CD8-positive, alpha-beta T cell (primary cell): ENCODE measurements at regions of chr4 and their contacts with region 1.

Region 1: DNA sequence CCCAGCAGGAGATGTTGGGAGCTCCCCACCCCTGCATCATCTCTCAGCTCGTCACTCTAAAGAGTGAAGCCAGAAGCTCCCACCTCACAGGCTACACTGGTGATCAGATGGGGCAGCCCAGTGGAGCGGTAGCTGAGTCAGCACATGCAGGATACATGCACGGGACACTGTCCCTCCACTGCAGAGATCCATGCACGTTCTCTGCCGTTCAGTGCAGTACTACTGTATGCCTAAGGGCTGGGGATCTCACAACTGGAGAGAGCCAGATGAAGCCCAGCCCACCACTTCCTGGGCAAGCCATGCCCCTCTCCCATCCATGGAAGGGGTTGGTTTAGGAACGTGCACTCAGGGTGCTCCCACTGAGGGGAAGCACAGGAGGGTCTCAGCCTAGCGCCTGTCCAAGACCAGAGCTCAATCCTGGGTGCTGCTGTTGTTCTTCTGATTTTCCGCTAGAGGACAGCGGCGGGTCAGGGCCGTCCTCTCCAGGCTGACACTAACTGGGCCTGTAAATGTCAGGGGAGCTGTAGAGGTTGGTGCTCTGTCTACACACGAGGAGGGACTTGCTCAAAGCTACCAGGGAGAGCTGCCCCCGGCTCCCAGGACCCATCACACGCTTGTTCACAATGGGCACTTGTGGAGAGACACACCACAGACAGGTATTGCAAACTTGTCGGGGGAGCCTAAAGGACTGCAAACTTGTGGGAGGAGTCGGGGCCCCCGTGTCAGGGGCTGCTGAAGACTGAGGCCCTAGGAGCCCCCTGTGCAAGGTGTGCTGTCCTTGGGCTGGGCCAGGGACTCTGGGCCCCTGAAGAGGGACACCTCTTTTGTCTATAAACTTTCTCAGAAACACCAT is 18.2 kb upstream of the ABLIM2 start:
- DNase-seq: peak in 7 of 9 experiments; percentile 21 to 62 (median 57)
- ATAC-seq: peak; percentile 98
- H3K4me3 ChIP-seq: no peak overlapping the region
- H3K4me3 Mint-ChIP-seq: no peak overlapping the region
- H3K27ac ChIP-seq: no peak overlapping the region
- H3K27ac Mint-ChIP-seq: no peak overlapping the region
- H3K4me1 ChIP-seq: no peaks in the 10 kb centered on the region
- H3K4me1 Mint-ChIP-seq: peaks cover 2% of the 10 kb centered on the region
- H3K27me3 ChIP-seq: no peaks in the 10 kb centered on the region
- H3K27me3 Mint-ChIP-seq: peaks cover 2% of the 10 kb centered on the region
- CTCF ChIP-seq: peak; percentile 68

Region 2: GRCh38 chr4:8015512-8015911 is 161.3 kb before region 1 on chr4:
- CTCF ChIA-PET with region 1: no interaction called
- POLR2A ChIA-PET with region 1: no interaction called
- intact Hi-C with region 1: no loop called
- DNase-seq: no peak
- ATAC-seq: no peak
- H3K4me3 ChIP-seq: no peak overlapping the region
- H3K4me3 Mint-ChIP-seq: no peak overlapping the region
- H3K27ac ChIP-seq: no peak overlapping the region
- H3K27ac Mint-ChIP-seq: no peak overlapping the region
- H3K4me1 ChIP-seq: no peaks in the 10 kb centered on the region
- H3K4me1 Mint-ChIP-seq: no peaks in the 10 kb centered on the region
- H3K27me3 ChIP-seq: no peaks in the 10 kb centered on the region
- H3K27me3 Mint-ChIP-seq: no peaks in the 10 kb centered on the region
- CTCF ChIP-seq: no peak

Region 3: DNA sequence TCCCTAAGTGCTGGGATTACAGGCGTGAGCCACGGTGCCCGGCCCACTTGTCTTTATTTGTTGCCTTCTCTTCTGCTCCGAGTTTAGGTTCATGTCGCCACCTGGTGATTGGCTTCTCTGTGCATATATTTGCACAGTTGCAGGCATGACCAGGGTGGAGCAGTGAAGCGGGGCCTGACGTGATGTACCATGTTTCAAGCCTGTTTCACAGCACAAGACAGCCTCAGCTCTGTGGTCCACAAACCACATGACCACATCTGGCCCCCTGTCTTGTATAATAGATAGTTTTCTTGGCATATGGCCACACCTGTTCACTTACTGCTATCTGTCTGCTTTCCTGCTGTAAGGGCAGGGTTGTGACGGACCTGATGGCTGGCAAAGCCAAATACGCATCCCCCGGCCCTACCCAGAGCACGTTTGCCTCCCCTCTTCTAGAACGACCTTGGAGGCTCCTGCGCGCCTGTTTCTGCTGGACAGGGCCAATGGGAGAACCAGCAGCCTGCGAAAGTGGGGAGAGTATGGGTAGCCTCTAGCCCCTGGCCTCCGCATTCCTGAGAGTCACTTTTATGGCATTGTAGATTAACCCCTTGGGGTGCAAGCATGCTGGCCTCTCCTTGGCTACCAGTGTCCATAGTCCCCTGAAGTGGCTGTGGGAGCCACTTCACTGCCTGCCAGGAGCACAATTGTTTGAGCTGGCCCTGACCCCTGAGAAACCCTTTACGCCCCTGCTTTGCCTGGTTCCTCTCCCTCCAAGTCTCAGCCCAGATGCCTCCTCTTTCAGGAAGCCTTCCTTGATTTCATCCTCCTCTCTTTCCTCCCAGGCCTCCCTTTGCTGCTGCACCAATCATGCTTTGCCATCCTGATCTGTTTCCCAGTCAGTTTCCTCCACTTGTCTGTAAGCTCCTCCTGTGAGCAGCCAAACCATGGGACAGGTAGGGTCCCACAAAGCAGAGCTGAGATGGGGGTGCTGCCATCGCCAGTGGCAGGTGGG is 16.3 kb after region 1 on chr4:
- CTCF ChIA-PET with region 1: interaction called, 13 read pairs
- POLR2A ChIA-PET with region 1: no interaction called
- intact Hi-C with region 1: loop called in 1 of 2 experiments (anchors 1 kb)
- DNase-seq: peak in 5 of 9 experiments; percentile 21 to 77 (median 56)
- ATAC-seq: peak; percentile 93
- H3K4me3 ChIP-seq: no peak overlapping the region
- H3K4me3 Mint-ChIP-seq: no peak overlapping the region
- H3K27ac ChIP-seq: no peak overlapping the region
- H3K27ac Mint-ChIP-seq: peak overlapping the region; percentile 62
- H3K4me1 ChIP-seq: peaks cover 7% of the 10 kb centered on the region
- H3K4me1 Mint-ChIP-seq: peaks cover 11% of the 10 kb centered on the region
- H3K27me3 ChIP-seq: no peaks in the 10 kb centered on the region
- H3K27me3 Mint-ChIP-seq: no peaks in the 10 kb centered on the region
- CTCF ChIP-seq: no peak

Region 4: DNA sequence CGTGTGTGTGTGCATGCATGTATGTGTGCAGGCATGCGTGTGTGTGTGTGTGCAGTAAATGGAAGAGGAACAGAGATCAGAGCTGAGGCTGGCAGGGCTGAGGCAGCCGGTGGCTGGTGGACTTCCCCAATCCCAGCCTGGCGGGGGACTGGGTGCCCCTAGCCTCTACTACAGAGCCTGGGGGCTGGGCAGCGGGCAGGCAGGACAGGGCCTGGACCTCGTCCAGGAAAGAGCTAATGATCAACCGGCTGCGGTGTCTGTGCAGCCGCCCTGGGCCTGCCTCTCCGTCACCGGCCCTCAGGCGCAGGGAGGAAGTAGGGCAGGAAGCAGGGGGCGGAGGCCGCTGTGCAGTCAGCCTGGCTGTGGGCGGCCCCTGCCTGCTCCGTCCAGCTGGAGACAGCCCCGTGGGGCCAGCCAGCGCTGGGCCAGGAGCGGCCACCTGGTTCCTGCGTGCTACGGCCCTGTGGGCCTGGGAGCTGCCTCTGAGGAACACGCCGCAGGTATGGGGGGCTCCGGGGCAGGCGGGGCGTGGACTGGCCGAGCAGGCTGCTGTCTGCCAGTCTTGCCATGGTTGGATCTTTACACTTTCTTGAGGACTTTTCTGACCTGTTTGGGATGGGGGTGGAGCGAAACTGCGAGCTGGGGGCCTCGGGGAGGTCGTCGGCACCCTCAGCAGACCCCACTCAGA is 22.3 kb after region 1 on chr4 and contains the start of gene SH3TC1:
- CTCF ChIA-PET with region 1: interaction called, 13 read pairs
- POLR2A ChIA-PET with region 1: interaction called, 4 read pairs
- intact Hi-C with region 1: no loop called
- DNase-seq: peak; percentile 19 to 83 (median 59)
- ATAC-seq: peak; percentile 52
- H3K4me3 ChIP-seq: peak within 1 kb of the TSS; percentile 63 to 69
- H3K4me3 Mint-ChIP-seq: peak within 1 kb of the TSS; percentile 97
- H3K27ac ChIP-seq: peak within 1 kb of the TSS; percentile 43 to 61
- H3K27ac Mint-ChIP-seq: peak within 1 kb of the TSS; percentile 97
- H3K4me1 ChIP-seq: peaks cover 47% of the 10 kb centered on the region
- H3K4me1 Mint-ChIP-seq: peaks cover 45% of the 10 kb centered on the region
- H3K27me3 ChIP-seq: no peaks in the 10 kb centered on the region
- H3K27me3 Mint-ChIP-seq: no peaks in the 10 kb centered on the region
- CTCF ChIP-seq: no peak
- total RNA-seq, gene SH3TC1: 90.7 to 102 TPM

Region 5: DNA sequence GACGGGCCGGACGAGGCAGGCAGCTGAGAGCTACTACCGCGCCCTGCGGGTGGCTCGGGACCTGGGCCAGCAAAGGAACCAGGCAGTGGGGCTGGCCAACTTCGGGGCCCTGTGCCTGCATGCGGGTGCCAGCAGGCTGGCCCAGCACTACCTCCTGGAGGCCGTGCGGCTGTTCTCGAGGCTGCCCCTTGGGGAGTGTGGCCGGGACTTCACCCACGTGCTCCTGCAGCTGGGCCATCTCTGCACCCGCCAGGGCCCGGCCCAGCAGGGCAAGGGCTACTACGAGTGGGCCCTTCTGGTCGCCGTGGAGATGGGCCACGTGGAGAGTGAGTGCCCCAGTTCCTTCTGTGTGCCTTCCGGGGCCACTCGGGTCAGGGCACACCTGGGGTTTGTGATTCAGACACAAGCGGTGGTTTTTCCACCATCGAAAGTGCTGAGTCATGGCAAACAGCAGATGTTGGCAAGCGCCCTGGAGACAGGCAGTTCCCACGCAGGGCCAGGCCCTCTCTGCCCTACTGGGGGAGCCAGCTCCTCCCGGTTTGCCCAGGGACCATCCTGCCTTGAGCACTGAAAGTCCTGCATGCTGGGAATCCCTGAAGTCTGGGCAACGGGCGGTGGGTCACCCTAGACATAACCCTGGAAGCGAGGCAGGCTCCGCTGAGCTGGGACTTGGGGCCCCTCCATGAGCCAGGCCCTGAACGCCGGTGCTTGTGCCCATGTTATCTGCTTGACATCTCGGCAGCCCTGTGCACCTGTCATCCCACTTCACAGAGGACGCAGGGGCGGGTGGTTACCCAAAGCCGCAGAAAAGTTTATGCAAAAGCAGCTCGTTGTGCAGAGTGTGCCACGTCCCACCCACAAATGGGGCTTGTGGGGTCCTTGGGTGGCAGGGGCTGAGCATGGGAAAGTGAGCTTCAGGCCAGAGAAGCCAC is 51.8 kb after region 1 on chr4:
- CTCF ChIA-PET with region 1: interaction called, 12 read pairs
- POLR2A ChIA-PET with region 1: no interaction called
- intact Hi-C with region 1: no loop called
- DNase-seq: peak; percentile 47 to 90 (median 71)
- ATAC-seq: peak; percentile 80
- H3K4me3 ChIP-seq: peak overlapping the region; percentile 8 to 18
- H3K4me3 Mint-ChIP-seq: peak overlapping the region; percentile 65
- H3K27ac ChIP-seq: peak overlapping the region; percentile 6 to 16
- H3K27ac Mint-ChIP-seq: peak overlapping the region; percentile 90
- H3K4me1 ChIP-seq: peaks cover 59% of the 10 kb centered on the region
- H3K4me1 Mint-ChIP-seq: peaks cover 63% of the 10 kb centered on the region
- H3K27me3 ChIP-seq: peaks cover 0 to 2% of the 10 kb centered on the region in 2 experiments
- H3K27me3 Mint-ChIP-seq: no peaks in the 10 kb centered on the region
- CTCF ChIP-seq: no peak

Region 6: GRCh38 chr4:8403173-8403753 is 226.5 kb after region 1 on chr4:
- CTCF ChIA-PET with region 1: interaction called, 56 read pairs
- POLR2A ChIA-PET with region 1: no interaction called
- intact Hi-C with region 1: loop called in 1 of 2 experiments (anchors 1 kb)
- DNase-seq: peak in 8 of 9 experiments; percentile 19 to 61 (median 56)
- ATAC-seq: peak; percentile 51
- H3K4me3 ChIP-seq: no peak overlapping the region
- H3K4me3 Mint-ChIP-seq: no peak overlapping the region
- H3K27ac ChIP-seq: no peak overlapping the region
- H3K27ac Mint-ChIP-seq: no peak overlapping the region
- H3K4me1 ChIP-seq: no peaks in the 10 kb centered on the region
- H3K4me1 Mint-ChIP-seq: no peaks in the 10 kb centered on the region
- H3K27me3 ChIP-seq: no peaks in the 10 kb centered on the region
- H3K27me3 Mint-ChIP-seq: no peaks in the 10 kb centered on the region
- CTCF ChIP-seq: peak; percentile 83

Region 7: DNA sequence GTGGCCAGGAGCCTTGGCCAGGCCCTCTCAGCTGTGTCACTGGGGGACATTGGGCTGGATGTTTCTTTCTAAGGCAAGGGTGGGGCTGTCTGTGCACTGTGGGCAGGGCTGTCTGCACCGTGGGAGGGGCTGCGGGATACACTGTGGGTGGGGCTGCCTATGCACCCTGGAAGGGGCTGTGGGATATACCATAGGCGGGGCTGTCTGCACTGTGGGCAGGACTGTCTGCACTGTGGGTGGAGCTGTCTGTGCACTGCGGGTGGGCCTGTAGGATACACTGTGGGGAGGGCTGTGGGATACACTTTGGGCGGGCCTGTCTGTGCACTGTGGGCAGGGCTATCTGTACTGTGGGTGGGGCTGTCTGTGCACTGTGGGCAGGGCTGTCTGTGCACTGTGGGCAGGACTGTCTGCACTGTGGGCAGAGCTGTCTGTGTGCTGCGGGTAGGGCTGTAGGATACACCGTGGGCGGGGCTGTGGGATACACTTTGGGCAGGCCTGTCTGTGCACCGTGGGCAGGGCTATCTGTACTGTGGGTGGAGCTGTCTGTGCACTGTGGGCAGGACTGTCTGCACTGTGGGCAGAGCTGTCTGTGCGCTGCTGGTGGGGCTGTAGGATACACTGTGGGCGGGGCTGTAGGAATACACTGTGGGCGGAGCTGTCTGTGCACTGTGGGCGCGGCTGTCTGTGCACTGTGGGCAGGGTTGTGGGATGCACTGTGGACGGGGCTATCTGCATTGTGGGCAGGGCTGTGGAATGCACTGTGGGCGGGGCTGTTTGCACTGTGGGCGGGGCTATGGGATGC is 232.7 kb after region 1 on chr4:
- CTCF ChIA-PET with region 1: interaction called, 56 read pairs
- POLR2A ChIA-PET with region 1: no interaction called
- intact Hi-C with region 1: no loop called
- DNase-seq: peak; percentile 43 to 95 (median 66)
- ATAC-seq: peak; percentile 86
- H3K4me3 ChIP-seq: no peak overlapping the region
- H3K4me3 Mint-ChIP-seq: no peak overlapping the region
- H3K27ac ChIP-seq: peak overlapping the region in 1 of 2 experiments; percentile 34
- H3K27ac Mint-ChIP-seq: peak overlapping the region; percentile 84
- H3K4me1 ChIP-seq: no peaks in the 10 kb centered on the region
- H3K4me1 Mint-ChIP-seq: peaks cover 14% of the 10 kb centered on the region
- H3K27me3 ChIP-seq: no peaks in the 10 kb centered on the region
- H3K27me3 Mint-ChIP-seq: no peaks in the 10 kb centered on the region
- CTCF ChIP-seq: no peak

Region 8: GRCh38 chr4:8594097-8595038 is 417.6 kb after region 1 on chr4:
- CTCF ChIA-PET with region 1: no interaction called
- POLR2A ChIA-PET with region 1: no interaction called
- intact Hi-C with region 1: loop called in 1 of 2 experiments (anchors 5 kb)
- DNase-seq: no peak
- ATAC-seq: no peak
- H3K4me3 ChIP-seq: no peak overlapping the region
- H3K4me3 Mint-ChIP-seq: no peak overlapping the region
- H3K27ac ChIP-seq: no peak overlapping the region
- H3K27ac Mint-ChIP-seq: no peak overlapping the region
- H3K4me1 ChIP-seq: no peaks in the 10 kb centered on the region
- H3K4me1 Mint-ChIP-seq: no peaks in the 10 kb centered on the region
- H3K27me3 ChIP-seq: peaks cover 2% of the 10 kb centered on the region in 2 experiments
- H3K27me3 Mint-ChIP-seq: peaks cover 21% of the 10 kb centered on the region
- CTCF ChIP-seq: no peak